A549 (cell line): ENCODE measurements at regions of chr19 and their contacts with region 1.

Region 1: DNA sequence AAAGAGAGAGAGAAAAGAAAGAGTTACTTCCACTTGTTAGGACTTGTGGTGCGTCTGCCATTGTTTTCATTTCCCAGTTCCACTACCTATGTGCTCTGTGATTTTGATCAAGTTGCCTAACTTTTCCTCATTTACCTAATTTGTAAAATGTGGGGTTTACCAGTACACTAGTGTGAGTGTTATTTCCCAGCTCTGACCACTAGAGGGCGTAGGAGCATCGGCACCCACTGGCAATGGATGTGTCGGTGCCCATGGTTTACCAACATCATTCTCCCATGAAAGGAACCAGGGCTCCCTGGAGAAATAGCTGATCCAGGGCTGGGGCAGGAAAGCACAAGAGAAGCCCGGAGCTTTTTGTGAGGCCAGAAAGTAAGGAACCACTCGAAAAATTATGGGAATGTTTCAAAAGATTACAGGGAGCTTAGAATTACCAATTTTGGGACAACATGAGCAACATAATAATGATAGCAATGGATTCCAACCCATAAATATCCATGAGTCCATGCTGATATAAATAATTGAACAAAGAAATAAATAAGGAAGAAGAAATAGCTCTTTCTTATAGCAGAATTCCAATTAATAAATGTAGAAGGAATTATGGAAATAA is 15.1 kb upstream of the CEACAM4 start:
- DNase-seq: peak; percentile 78 to 99
- ATAC-seq: peak; percentile 94 to 99
- H3K4me3 ChIP-seq: no peak overlapping the region
- H3K27ac ChIP-seq: no peak overlapping the region
- H3K4me1 ChIP-seq: no peaks in the 10 kb centered on the region
- CTCF ChIP-seq: peak; percentile 99
- EP300 ChIP-seq: no peak
- POLR2A ChIP-seq: no peak
- RAD21 ChIP-seq: peak; percentile 95 to 98

Region 2: DNA sequence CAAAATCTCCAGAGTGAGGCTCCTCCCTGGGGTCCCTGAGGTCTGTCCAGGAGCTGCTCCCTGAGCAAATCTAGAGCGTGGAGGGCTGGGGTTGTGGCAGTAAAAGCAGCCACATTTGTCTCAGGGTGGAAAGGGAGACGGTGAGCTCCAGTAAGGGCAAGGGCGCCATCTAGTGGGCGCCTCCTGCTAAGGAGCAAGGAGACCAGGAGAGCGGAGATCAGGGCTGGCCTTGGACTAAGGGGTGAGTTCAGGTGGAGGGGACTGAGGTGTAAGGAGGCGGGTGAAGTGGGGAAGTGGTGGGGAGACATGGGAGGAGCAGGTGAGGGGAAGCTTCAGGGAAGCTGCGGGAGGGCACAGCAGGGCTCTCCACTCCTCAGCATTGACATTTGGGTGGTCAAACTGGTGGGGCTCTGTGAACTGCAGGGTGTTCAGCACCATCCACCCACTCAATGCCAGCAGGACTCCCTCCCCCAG is 71.3 kb before region 1 on chr19:
- CTCF ChIA-PET with region 1: interaction called, 10 read pairs
- POLR2A ChIA-PET with region 1: no interaction called
- DNase-seq: peak; percentile 85 to 90
- ATAC-seq: peak; percentile 90 to 99
- H3K4me3 ChIP-seq: no peak overlapping the region
- H3K27ac ChIP-seq: no peak overlapping the region
- H3K4me1 ChIP-seq: no peaks in the 10 kb centered on the region; the same call in 2 of the 3 replicates
- CTCF ChIP-seq: peak; percentile 99
- EP300 ChIP-seq: no peak
- POLR2A ChIP-seq: no peak
- RAD21 ChIP-seq: peak; percentile 96 to 99

Region 3: DNA sequence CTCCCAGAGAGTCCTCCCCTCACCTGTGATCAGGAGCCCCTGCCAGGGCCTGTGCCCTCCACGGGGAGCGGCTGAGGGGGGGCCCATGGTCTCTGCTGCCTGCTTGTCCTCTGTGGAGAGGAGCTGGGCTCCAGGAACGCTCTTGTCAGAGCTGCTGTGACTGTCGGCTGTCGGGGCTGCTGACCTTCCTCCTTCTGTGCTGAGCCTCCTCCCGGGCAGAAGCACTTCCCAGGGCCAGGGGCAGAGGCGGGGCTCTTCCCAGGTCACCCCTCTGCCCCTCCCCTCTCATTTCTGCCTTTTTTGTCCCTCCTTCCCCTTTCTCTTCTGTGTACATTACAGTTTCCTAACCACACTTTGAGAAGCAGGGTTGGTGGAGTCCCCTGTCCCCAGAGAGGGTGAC is 15.1 kb before region 1 on chr19 and contains the start of gene CEACAM4:
- CTCF ChIA-PET with region 1: interaction called, 27 read pairs
- POLR2A ChIA-PET with region 1: no interaction called
- DNase-seq: no peak
- ATAC-seq: no peak; a peak in 2 of 6 replicates
- H3K4me3 ChIP-seq: no peak within 1 kb of the TSS
- H3K27ac ChIP-seq: no peak within 1 kb of the TSS
- H3K4me1 ChIP-seq: no peaks in the 10 kb centered on the region
- CTCF ChIP-seq: no peak
- EP300 ChIP-seq: no peak
- POLR2A ChIP-seq: no peak
- RAD21 ChIP-seq: no peak
- polyA plus RNA-seq, gene CEACAM4: not detected in 2 replicates

Region 4: DNA sequence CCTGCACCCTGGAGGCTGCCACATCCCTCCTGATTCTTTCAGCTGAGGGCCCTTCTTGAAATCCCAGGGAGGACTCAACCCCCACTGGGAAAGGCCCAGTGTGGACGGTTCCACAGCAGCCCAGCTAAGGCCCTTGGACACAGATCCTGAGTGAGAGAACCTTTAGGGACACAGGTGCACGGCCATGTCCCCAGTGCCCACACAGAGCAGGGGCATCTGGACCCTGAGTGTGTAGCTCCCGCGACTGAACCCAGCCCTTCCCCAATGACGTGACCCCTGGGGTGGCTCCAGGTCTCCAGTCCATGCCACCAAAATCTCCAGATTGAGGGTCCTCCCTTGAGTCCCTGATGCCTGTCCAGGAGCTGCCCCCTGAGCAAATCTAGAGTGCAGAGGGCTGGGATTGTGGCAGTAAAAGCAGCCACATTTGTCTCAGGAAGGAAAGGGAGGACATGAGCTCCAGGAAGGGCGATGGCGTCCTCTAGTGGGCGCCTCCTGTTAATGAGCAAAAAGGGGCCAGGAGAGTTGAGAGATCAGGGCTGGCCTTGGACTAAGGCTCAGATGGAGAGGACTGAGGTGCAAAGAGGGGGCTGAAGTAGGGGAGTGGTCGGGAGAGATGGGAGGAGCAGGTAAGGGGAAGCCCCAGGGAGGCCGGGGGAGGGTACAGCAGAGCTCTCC is 59.6 kb after region 1 on chr19:
- CTCF ChIA-PET with region 1: interaction called, 229 read pairs
- POLR2A ChIA-PET with region 1: no interaction called
- DNase-seq: peak; percentile 58 to 71
- ATAC-seq: peak; percentile 5 to 9; a peak in 4 of 6 replicates
- H3K4me3 ChIP-seq: no peak overlapping the region
- H3K27ac ChIP-seq: peak overlapping the region; percentile 71 to 86
- H3K4me1 ChIP-seq: peaks cover 68% of the 10 kb centered on the region
- CTCF ChIP-seq: peak; percentile 59
- EP300 ChIP-seq: no peak
- POLR2A ChIP-seq: no peak
- RAD21 ChIP-seq: peak; percentile 43 to 73; a peak in 4 of 5 replicates

Region 5: GRCh38 chr19:41734617-41735016 is 92.6 kb after region 1 on chr19:
- CTCF ChIA-PET with region 1: interaction called, 261 read pairs
- POLR2A ChIA-PET with region 1: no interaction called
- DNase-seq: no peak
- ATAC-seq: peak in 1 of 2 experiments; percentile 26; a peak in 2 of 6 replicates
- H3K4me3 ChIP-seq: no peak overlapping the region
- H3K27ac ChIP-seq: no peak overlapping the region
- H3K4me1 ChIP-seq: no peaks in the 10 kb centered on the region
- CTCF ChIP-seq: no peak
- EP300 ChIP-seq: no peak
- POLR2A ChIP-seq: no peak
- RAD21 ChIP-seq: no peak

Region 6: DNA sequence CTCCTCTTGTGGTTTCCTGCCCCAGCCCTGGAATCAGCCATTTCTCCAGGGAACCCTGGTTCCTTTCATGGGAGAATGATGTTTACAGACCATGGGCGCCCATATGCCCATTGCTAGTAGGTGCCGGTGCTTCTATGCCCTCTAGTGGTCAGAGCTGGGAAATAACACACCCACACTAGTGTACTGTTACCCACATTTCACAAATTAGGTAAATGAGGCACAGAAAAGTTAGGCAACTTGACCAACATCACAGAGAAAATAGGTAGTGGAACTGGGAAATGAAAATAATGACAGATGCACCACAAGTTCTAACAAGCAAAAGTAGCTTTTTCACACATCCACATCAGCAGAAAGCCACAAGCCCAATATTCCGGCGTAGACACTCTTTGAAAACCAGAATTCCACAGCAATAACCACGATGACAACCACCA is 153.1 kb after region 1 on chr19:
- CTCF ChIA-PET with region 1: interaction called, 78 read pairs
- POLR2A ChIA-PET with region 1: no interaction called
- DNase-seq: peak; percentile 49 to 70
- ATAC-seq: peak; percentile 61 to 89
- H3K4me3 ChIP-seq: no peak overlapping the region
- H3K27ac ChIP-seq: no peak overlapping the region
- H3K4me1 ChIP-seq: 0 out of 3 replicates have a peak, but pooled peaks cover 11% of the 10 kb centered on the region
- CTCF ChIP-seq: peak; percentile 96
- EP300 ChIP-seq: no peak
- POLR2A ChIP-seq: no peak
- RAD21 ChIP-seq: peak; percentile 32 to 47; a peak in 4 of 5 replicates

Region 7: DNA sequence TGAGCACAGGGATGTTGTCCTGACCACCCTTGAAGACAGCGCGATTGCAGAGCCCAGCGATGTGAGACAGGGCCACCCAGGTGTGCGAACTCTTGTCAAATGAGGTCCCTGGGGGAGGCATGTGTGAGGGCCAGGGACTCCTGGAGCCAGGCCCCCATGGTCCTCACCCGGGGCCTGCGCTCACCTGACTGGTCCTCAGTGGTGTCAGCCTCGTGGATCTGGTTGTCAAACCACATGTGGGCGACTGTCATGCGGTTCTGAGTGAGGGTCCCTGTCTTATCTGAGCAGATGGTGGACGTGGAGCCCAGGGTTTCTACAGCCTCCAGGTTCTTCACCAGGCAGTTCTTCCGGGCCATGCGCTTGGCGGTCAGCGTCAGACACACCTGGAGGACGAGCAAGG is 339.7 kb after region 1 on chr19:
- CTCF ChIA-PET with region 1: no interaction called
- POLR2A ChIA-PET with region 1: no interaction called
- DNase-seq: no peak
- ATAC-seq: peak in 1 of 2 experiments; percentile 13; a peak in 3 of 6 replicates
- H3K4me3 ChIP-seq: no peak overlapping the region
- H3K27ac ChIP-seq: no peak overlapping the region
- H3K4me1 ChIP-seq: no peaks in the 10 kb centered on the region
- CTCF ChIP-seq: no peak
- EP300 ChIP-seq: no peak
- POLR2A ChIP-seq: no peak
- RAD21 ChIP-seq: no peak